GM12878 (cell line): ENCODE measurements at regions of chr5 and their contacts with region 1.

Region 1: GRCh38 chr5:41869739-41870626 is at the start of gene OXCT1:
- DNase-seq: peak; percentile 45
- ATAC-seq: peak; percentile 95
- H3K4me3 ChIP-seq: peak within 1 kb of the TSS; percentile 79
- H3K27ac ChIP-seq: peak within 1 kb of the TSS; percentile 89
- H3K4me1 ChIP-seq: peaks cover 6% of the 10 kb centered on the region
- H3K27me3 ChIP-seq: no peaks in the 10 kb centered on the region
- CTCF ChIP-seq: no peak
- EP300 ChIP-seq: no peak
- POLR2A ChIP-seq: peak; percentile 98
- RAD21 ChIP-seq: no peak
- polyA plus RNA-seq, gene OXCT1: 46.9 to 61.3 TPM

Region 2: DNA sequence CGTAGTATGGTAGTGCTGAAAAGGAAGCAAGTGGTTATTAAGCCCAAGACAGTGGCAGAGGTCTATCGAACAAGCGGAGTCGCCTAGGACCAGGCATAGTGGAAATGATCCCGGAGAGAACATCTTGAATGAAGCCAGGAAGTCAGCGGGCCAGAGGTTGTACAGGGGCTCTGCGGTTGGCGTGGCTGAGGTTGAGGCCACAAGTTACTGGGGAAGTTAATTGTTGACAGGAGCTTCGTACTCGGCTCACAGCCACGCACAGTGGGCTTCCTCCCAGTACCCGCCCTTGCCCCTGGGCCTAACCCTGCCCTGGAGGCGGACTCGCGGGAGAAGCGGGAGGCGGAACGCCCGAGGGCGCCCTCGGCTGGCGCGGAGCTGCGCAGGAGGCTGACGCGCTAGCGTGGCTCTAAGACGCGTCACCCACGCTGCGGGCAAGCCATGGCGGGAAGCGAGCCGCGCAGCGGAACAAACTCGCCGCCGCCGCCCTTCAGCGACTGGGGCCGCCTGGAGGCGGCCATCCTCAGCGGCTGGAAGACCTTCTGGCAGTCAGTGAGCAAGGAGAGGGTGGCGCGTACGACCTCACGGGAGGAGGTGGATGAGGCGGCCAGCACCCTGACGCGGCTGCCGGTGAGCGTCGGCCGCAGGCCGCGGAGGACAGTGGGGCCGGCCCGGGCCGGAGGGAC is 55.0 kb after region 1 on chr5 and contains the start of gene FBXO4:
- CTCF ChIA-PET with region 1: interaction called, 6 read pairs
- POLR2A ChIA-PET with region 1: interaction called, 4 read pairs
- RAD21 ChIA-PET with region 1: interaction called, 4 read pairs
- SMC1A ChIA-PET with region 1: interaction called, 10 read pairs
- in situ Hi-C with region 1: no loop called
- intact Hi-C with region 1: loop called (anchors 1 kb)
- DNase-seq: peak; percentile 63
- ATAC-seq: peak; percentile 96
- H3K4me3 ChIP-seq: peak within 1 kb of the TSS; percentile 84
- H3K27ac ChIP-seq: peak within 1 kb of the TSS; percentile 97
- H3K4me1 ChIP-seq: peaks cover 21% of the 10 kb centered on the region
- H3K27me3 ChIP-seq: no peaks in the 10 kb centered on the region
- CTCF ChIP-seq: peak; percentile 58 to 82 (median 74)
- EP300 ChIP-seq: no peak; a peak in 1 of 4 replicates
- POLR2A ChIP-seq: peak; percentile 96
- RAD21 ChIP-seq: peak; percentile 47; the same call in 1 of the 2 replicates
- polyA plus RNA-seq, gene FBXO4: 7.2 to 13.8 TPM